Gastrocnemius medialis (tissue), 4 donors: ENCODE measurements at regions of chr20 and their contacts with region 1.

Region 1: GRCh38 chr20:32443386-32443974 is 85.3 kb downstream of the ASXL1 start:
- DNase-seq: no peak
- ATAC-seq: no peak
- H3K4me3 ChIP-seq: no peak overlapping the region
- H3K27ac ChIP-seq: no peak overlapping the region
- H3K4me1 ChIP-seq: peaks cover 11 to 15% of the 10 kb centered on the region in 2 donors
- H3K27me3 ChIP-seq: no peaks in the 10 kb centered on the region
- CTCF ChIP-seq: no peak
- POLR2A ChIP-seq: no peak

Region 2: GRCh38 chr20:31368301-31368700 is 1075.2 kb before region 1 on chr20 and contains the start of gene DEFB118:
- in situ Hi-C with region 1: no loop called
- intact Hi-C with region 1: no loop called
- DNase-seq: no peak
- ATAC-seq: no peak
- H3K4me3 ChIP-seq: no peak within 1 kb of the TSS
- H3K27ac ChIP-seq: no peak within 1 kb of the TSS
- H3K4me1 ChIP-seq: no peaks in the 10 kb centered on the region
- H3K27me3 ChIP-seq: no peaks in the 10 kb centered on the region
- CTCF ChIP-seq: no peak
- POLR2A ChIP-seq: no peak
- total RNA-seq, gene DEFB118: not detected

Region 3: DNA sequence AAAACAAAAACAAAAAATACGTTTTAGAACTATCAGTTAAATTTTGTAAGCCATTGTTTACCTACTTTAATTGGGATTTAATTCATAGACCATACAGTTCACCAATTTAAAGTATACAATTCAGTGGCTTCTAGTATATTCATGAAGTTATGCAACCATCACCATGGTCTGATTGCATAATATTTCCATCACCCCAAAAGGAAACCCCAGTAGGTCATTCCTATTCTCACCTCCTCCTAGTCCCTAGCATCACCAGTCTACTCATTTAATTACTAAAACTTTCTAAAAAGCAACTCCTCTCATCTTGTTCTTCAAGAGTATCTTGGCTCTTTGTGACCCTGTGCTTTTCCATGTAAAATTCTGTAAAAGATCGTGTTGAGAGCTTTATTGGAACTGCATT is 25.1 kb before region 1 on chr20:
- in situ Hi-C with region 1: no loop called
- intact Hi-C with region 1: loop called (anchors 1 kb)
- DNase-seq: no peak
- ATAC-seq: no peak
- H3K4me3 ChIP-seq: no peak overlapping the region
- H3K27ac ChIP-seq: no peak overlapping the region
- H3K4me1 ChIP-seq: peaks cover 4 to 7% of the 10 kb centered on the region in 2 donors
- H3K27me3 ChIP-seq: no peaks in the 10 kb centered on the region
- CTCF ChIP-seq: no peak
- POLR2A ChIP-seq: no peak

Region 4: GRCh38 chr20:32918296-32918695 is 474.8 kb after region 1 on chr20:
- in situ Hi-C with region 1: no loop called
- intact Hi-C with region 1: no loop called
- DNase-seq: no peak
- ATAC-seq: no peak
- H3K4me3 ChIP-seq: no peak overlapping the region
- H3K27ac ChIP-seq: no peak overlapping the region
- H3K4me1 ChIP-seq: no peaks in the 10 kb centered on the region
- H3K27me3 ChIP-seq: no peaks in the 10 kb centered on the region
- CTCF ChIP-seq: no peak
- POLR2A ChIP-seq: no peak